MCF 10A (cell line): ENCODE measurements at regions of chr19 and their contacts with region 1.

Region 1: DNA sequence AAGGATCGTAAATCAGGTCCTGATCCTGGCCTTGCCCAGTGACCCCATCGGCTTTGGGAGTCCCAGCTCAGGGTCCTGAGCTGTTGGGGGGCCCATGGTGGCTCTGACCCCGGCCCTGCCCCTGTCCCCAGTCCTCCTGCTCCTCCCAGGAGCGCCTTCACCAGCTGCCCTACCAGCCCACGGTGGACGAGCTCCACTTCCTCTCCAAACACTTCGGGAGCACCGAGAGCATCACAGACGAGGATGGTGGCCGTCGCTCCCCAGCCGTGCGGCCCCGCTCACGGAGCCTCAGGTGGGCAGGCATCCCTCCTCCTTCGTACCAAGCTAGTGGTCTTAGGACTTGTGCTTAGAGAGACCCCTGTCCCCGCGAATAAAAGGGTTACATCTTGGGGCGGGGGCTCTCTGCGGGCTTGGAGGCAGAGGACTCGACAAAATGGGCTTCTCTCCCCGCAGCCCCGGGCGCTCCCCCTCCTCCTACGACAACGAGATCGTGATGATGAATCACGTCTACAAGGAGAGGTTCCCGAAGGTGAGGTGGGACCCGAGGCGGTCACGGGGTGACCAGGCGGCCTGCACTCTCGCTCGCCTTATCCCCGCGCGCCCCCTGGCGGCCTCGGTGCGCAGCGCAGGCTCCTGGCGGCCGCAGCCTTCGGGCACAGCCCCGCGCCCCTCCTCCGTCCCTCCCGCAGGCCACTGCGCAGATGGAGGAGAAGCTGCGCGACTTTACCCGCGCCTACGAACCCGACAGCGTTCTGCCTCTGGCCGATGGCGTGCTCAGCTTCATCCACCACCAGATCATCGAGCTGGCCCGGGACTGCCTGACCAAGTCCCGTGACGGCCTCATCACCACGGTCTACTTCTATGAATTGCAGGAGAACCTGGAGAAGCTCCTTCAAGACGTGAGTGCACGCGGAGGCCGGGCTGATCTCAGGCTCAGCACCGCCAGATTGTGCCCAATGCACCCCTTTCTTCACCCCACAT is 9.1 kb downstream of the MAST1 start:
- DNase-seq: peak; percentile 85
- H3K4me3 Mint-ChIP-seq: peak overlapping the region; percentile 57
- H3K27ac Mint-ChIP-seq: no peak overlapping the region
- H3K4me1 Mint-ChIP-seq: peaks cover 5% of the 10 kb centered on the region
- H3K27me3 Mint-ChIP-seq: no peaks in the 10 kb centered on the region
- CTCF ChIP-seq: peak; percentile 99

Region 2: GRCh38 chr19:12374026-12374425 is 473.4 kb before region 1 on chr19:
- CTCF ChIA-PET with region 1: no interaction called
- POLR2A ChIA-PET with region 1: no interaction called
- intact Hi-C with region 1: no loop called
- DNase-seq: no peak
- H3K4me3 Mint-ChIP-seq: no peak overlapping the region
- H3K27ac Mint-ChIP-seq: no peak overlapping the region
- H3K4me1 Mint-ChIP-seq: no peaks in the 10 kb centered on the region
- H3K27me3 Mint-ChIP-seq: no peaks in the 10 kb centered on the region
- CTCF ChIP-seq: no peak

Region 3: DNA sequence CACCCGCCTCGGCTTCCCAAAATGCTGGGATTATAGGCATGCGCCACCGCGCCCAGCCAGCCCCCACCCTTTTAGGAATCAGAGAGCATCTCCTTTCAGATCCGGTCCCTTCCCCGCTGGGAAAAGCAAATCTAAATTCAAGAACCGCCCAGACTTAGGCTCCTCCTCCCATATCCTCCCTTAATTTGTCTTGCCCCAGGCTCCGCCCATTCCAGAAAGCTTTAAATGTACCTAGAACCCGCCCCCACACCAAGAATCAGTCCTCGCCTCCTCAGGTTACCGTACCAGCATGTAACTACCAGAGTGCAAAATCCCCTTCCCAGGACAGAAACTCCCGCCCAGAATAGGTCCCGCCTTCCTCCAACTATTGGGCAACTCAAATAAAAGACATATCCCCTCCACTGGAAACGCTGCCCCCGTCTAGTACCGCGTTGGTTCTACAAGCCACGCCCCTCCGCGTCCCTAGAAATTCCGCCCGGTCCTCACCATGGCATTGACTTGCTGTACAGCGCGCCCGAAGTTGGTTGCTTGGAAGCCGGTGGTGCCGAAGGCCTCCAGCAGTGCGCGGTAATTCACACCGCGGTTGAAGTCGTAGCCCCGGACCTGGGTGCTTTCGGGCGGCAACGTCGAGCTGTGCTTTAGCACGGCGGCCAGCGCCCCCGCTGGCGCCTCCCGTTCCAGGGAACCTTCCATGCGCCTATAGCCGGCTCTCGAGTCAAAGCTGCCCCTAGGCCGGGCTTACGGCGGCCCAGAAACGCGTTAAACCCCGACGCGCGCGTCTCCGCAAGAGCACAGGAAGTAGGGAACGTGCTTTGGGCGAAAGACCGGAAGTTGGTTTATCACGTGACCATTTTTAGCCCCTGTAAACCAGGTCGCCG is 166.1 kb before region 1 on chr19 and contains the start of gene DHPS:
- CTCF ChIA-PET with region 1: interaction called, 8 read pairs
- POLR2A ChIA-PET with region 1: no interaction called
- intact Hi-C with region 1: loop called (anchors 2 kb)
- DNase-seq: peak; percentile 100
- H3K4me3 Mint-ChIP-seq: peak within 1 kb of the TSS; percentile 96
- H3K27ac Mint-ChIP-seq: peak within 1 kb of the TSS; percentile 97
- H3K4me1 Mint-ChIP-seq: peaks cover 5% of the 10 kb centered on the region
- H3K27me3 Mint-ChIP-seq: no peaks in the 10 kb centered on the region
- CTCF ChIP-seq: no peak
- total RNA-seq, gene DHPS: 74.2 and 85.8 TPM in 2 replicates

Region 4: DNA sequence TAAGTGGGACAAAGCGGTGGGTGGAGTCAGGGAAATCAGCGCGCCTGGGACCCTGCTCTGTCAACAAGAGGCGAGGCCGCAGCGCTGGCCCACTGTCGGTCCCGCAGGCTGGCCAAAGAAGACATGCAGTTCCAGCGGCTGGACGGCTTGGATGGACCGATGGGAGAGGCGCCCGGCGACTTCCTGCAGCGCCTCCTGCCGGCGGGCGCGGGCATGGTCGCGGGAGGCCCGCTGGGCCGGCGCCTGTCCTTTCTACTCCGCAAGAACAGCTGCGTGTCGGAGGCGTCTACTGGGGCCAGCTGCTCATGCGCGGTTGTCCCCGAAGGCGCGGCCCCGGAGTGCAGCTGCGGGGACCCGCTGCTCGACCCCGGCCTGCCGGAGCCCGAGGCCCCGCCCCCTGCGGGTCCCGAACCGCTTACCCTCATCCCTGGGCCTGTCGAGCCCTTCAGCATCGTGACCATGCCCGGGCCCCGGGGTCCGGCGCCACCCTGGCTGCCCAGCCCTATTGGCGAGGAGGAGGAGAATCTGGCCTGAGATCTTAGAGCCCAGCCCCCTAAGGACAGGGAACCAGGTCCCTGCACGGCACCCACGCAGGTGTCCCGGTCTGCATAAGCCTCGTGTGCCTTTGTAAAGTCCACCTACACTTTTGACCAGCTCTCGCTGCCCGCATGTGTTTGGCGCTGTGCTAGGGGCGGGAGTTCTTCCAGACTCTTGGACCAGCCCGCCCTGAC is 89.7 kb before region 1 on chr19:
- CTCF ChIA-PET with region 1: interaction called, 43 read pairs
- POLR2A ChIA-PET with region 1: interaction called, 4 read pairs
- intact Hi-C with region 1: loop called (anchors 1 kb)
- DNase-seq: peak; percentile 72
- H3K4me3 Mint-ChIP-seq: peak overlapping the region; percentile 35
- H3K27ac Mint-ChIP-seq: no peak overlapping the region
- H3K4me1 Mint-ChIP-seq: peaks cover 5% of the 10 kb centered on the region
- H3K27me3 Mint-ChIP-seq: no peaks in the 10 kb centered on the region
- CTCF ChIP-seq: peak; percentile 97

Region 5: DNA sequence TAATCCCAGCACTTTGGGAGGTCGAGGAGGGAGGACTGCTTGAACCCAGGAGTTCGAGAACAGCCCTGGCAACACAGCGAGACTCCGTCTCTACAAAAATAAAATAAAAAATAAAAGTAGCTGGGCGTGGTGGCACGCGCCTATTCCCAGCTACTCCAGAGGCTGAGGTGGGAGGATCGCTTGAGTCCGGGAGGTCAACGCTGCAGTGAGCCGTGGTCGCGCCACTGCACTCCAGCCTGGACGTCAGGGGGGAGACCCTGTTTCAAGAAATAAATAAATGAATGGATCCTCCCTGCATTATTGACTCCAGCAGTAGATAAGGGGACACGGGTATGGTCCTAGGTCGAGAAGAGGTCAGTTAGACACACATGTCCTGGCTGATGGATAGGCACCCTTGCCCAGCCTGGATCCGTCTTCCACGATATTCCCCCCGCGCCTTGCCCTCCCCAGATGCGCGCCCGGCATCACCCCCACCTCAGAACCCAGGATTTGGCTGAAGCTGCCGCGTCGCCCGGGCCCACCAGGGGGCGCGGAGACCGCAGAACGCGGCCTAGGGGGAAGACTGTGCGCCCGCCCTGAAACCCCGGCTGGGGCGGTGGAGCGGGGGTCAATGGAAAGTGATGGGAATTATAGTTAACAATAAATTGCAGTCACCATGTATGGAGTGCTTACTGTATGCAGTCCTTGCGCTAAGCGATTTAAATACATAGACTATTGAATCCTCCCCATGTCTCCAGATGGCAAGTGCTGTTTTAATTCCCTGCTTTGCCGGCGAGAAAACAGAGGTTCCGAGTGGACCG is 70.0 kb before region 1 on chr19:
- CTCF ChIA-PET with region 1: interaction called, 21 read pairs
- POLR2A ChIA-PET with region 1: interaction called, 4 read pairs
- intact Hi-C with region 1: loop called (anchors 5 kb)
- DNase-seq: peak; percentile 80
- H3K4me3 Mint-ChIP-seq: peak overlapping the region; percentile 79
- H3K27ac Mint-ChIP-seq: peak overlapping the region; percentile 81
- H3K4me1 Mint-ChIP-seq: peaks cover 13% of the 10 kb centered on the region
- H3K27me3 Mint-ChIP-seq: no peaks in the 10 kb centered on the region
- CTCF ChIP-seq: peak; percentile 83

Region 6: GRCh38 chr19:12796146-12797071 is 51.0 kb before region 1 on chr19:
- CTCF ChIA-PET with region 1: interaction called, 46 read pairs
- POLR2A ChIA-PET with region 1: interaction called, 17 read pairs
- intact Hi-C with region 1: loop called (anchors 1 kb)
- DNase-seq: peak; percentile 87
- H3K4me3 Mint-ChIP-seq: peak overlapping the region; percentile 35
- H3K27ac Mint-ChIP-seq: peak overlapping the region; percentile 84
- H3K4me1 Mint-ChIP-seq: peaks cover 18% of the 10 kb centered on the region
- H3K27me3 Mint-ChIP-seq: no peaks in the 10 kb centered on the region
- CTCF ChIP-seq: peak; percentile 94

Region 7: GRCh38 chr19:12828494-12828893 is 19.0 kb before region 1 on chr19:
- CTCF ChIA-PET with region 1: interaction called, 21 read pairs
- POLR2A ChIA-PET with region 1: no interaction called
- intact Hi-C with region 1: no loop called
- DNase-seq: peak; percentile 70
- H3K4me3 Mint-ChIP-seq: no peak overlapping the region
- H3K27ac Mint-ChIP-seq: no peak overlapping the region
- H3K4me1 Mint-ChIP-seq: peaks cover 6% of the 10 kb centered on the region
- H3K27me3 Mint-ChIP-seq: peaks cover 21% of the 10 kb centered on the region
- CTCF ChIP-seq: no peak

Region 8: GRCh38 chr19:12881172-12881808 is 33.8 kb after region 1 on chr19 and contains the start of gene DNASE2:
- CTCF ChIA-PET with region 1: interaction called, 20 read pairs
- POLR2A ChIA-PET with region 1: interaction called, 6 read pairs
- intact Hi-C with region 1: no loop called
- DNase-seq: peak; percentile 99
- H3K4me3 Mint-ChIP-seq: peak within 1 kb of the TSS; percentile 84
- H3K27ac Mint-ChIP-seq: peak within 1 kb of the TSS; percentile 90
- H3K4me1 Mint-ChIP-seq: no peaks in the 10 kb centered on the region
- H3K27me3 Mint-ChIP-seq: no peaks in the 10 kb centered on the region
- CTCF ChIP-seq: no peak
- total RNA-seq, gene DNASE2: 26.7 and 28.7 TPM in 2 replicates